Tibial artery (tissue), 4 donors: ENCODE measurements at regions of chr4 and their contacts with region 1.

Region 1: GRCh38 chr4:94406668-94407437 is 44.9 kb upstream of the PDLIM5 start:
- DNase-seq: peak; percentile 81 to 82
- H3K4me3 ChIP-seq: peak overlapping the region; percentile 26 to 31
- H3K27ac ChIP-seq: peak overlapping the region; percentile 71 to 75
- H3K4me1 ChIP-seq: peaks cover 0 to 52% (median 30%) of the 10 kb centered on the region in 4 donors
- H3K27me3 ChIP-seq: no peaks in the 10 kb centered on the region
- CTCF ChIP-seq: peak; percentile 81 to 95

Region 2: DNA sequence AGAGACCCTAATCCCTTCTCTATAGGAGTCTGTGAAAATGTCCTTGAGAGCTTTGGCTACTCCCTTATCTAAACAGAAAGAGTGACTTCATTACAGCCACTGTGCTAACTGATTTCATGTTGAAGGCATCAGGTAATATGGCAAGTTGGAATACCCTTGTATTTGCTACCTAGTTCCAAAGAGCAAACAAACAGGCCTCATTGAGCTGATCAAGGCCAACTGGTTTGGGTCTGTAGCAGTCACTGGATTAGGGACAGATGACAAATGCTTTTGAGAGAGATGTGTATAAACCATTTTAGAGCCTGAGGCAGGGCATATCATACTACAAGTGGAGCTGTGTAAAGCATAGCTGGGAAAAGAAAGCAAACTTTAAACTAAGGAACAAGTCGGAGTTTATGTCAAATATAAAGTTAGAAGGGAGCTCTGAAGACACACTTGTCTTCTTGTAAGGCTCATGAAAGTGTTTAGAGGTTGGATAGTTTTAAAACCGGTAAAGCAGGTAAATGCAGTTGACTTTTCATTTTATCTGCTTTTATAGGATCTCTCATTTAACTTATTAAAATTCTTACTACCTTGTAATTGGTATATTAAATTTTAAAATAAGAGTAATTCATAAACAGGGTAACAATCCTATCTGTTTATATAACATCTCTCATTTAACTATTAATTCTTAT is 22.2 kb after region 1 on chr4:
- intact Hi-C with region 1: no loop called
- DNase-seq: no peak
- H3K4me3 ChIP-seq: no peak overlapping the region
- H3K27ac ChIP-seq: no peak overlapping the region
- H3K4me1 ChIP-seq: peaks cover 0 to 9% (median 0%) of the 10 kb centered on the region in 4 donors
- H3K27me3 ChIP-seq: no peaks in the 10 kb centered on the region
- CTCF ChIP-seq: no peak

Region 3: GRCh38 chr4:94451695-94452475 is 45.0 kb after region 1 on chr4 and contains the start of gene PDLIM5:
- intact Hi-C with region 1: loop called (anchors 5 kb)
- DNase-seq: peak; percentile 86 to 95
- H3K4me3 ChIP-seq: peak within 1 kb of the TSS; percentile 80 to 81
- H3K27ac ChIP-seq: peak within 1 kb of the TSS; percentile 95 to 96
- H3K4me1 ChIP-seq: peaks cover 0 to 59% (median 19%) of the 10 kb centered on the region in 4 donors
- H3K27me3 ChIP-seq: no peaks in the 10 kb centered on the region
- CTCF ChIP-seq: no peak

Region 4: DNA sequence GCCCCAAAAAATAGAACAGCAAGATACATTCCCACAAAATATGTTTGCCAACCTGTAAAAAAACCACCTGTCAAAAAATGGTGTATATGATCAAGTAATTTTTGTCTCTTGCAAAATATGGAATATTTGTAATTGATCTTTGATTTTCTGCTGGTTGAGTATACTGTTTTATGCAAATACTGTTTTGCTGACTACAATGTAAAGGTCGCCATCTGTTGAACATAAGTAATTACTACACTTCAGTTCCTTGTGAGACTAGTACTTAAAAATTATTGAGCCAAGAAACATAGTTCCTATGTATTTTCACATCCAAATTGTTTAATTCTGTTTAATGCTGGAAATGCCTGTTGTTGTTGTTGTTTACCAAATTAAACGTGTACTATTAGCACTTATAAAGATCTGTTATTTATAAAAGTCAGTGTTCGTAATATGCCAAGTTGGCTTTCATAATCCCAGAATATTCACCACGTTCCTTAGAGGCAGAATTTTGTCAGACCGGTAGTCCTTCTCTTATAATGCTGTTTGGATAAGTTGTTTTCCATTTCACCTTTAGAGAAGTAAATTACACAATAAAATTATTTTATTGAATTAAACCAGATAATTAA is 189.1 kb after region 1 on chr4:
- intact Hi-C with region 1: loop called (anchors 2 kb)
- DNase-seq: no peak
- H3K4me3 ChIP-seq: no peak overlapping the region
- H3K27ac ChIP-seq: peak overlapping the region in 1 of 2 donors; percentile 15
- H3K4me1 ChIP-seq: peaks cover 0 to 46% (median 14%) of the 10 kb centered on the region in 4 donors
- H3K27me3 ChIP-seq: no peaks in the 10 kb centered on the region
- CTCF ChIP-seq: peak; percentile 64 to 68

Region 5: GRCh38 chr4:95124906-95125504 is 718.2 kb after region 1 on chr4:
- intact Hi-C with region 1: loop called (anchors 10 kb)
- DNase-seq: no peak
- H3K4me3 ChIP-seq: no peak overlapping the region
- H3K27ac ChIP-seq: no peak overlapping the region
- H3K4me1 ChIP-seq: peaks cover 0 to 8% (median 2%) of the 10 kb centered on the region in 4 donors
- H3K27me3 ChIP-seq: no peaks in the 10 kb centered on the region
- CTCF ChIP-seq: peak; percentile 41 to 51

Region 6: GRCh38 chr4:95371476-95372224 is 964.8 kb after region 1 on chr4:
- intact Hi-C with region 1: no loop called
- DNase-seq: no peak
- H3K4me3 ChIP-seq: no peak overlapping the region
- H3K27ac ChIP-seq: no peak overlapping the region
- H3K4me1 ChIP-seq: no peaks in the 10 kb centered on the region
- H3K27me3 ChIP-seq: no peaks in the 10 kb centered on the region
- CTCF ChIP-seq: no peak